ENCODE measurements at regions of chr11 and their contacts with region 1.

Region 1: GRCh38 chr11:124961972-124962609 is 8.1 kb downstream of the CCDC15 start:
- DNase-seq: peak in 1 of 4 donors; percentile 40
- ATAC-seq: peak; percentile 76
- H3K4me3 ChIP-seq: no peak overlapping the region
- H3K27ac ChIP-seq: no peak overlapping the region
- H3K4me1 ChIP-seq: no peaks in the 10 kb centered on the region
- H3K27me3 ChIP-seq: no peaks in the 10 kb centered on the region
- CTCF ChIP-seq: peak; percentile 37 to 87 (median 77)
- POLR2A ChIP-seq: no peak

Region 2: GRCh38 chr11:124359566-124359965 is 602.5 kb before region 1 on chr11:
- intact Hi-C with region 1: no loop called
- DNase-seq: no peak
- ATAC-seq: no peak
- H3K4me3 ChIP-seq: no peak overlapping the region
- H3K27ac ChIP-seq: no peak overlapping the region
- H3K4me1 ChIP-seq: no peaks in the 10 kb centered on the region
- H3K27me3 ChIP-seq: no peaks in the 10 kb centered on the region
- CTCF ChIP-seq: no peak
- POLR2A ChIP-seq: no peak

Region 3: GRCh38 chr11:125141686-125142535 is 179.8 kb after region 1 on chr11:
- intact Hi-C with region 1: loop called (anchors 5 kb)
- DNase-seq: peak; percentile 17 to 52 (median 36)
- ATAC-seq: peak; percentile 71
- H3K4me3 ChIP-seq: no peak overlapping the region
- H3K27ac ChIP-seq: no peak overlapping the region
- H3K4me1 ChIP-seq: no peaks in the 10 kb centered on the region
- H3K27me3 ChIP-seq: no peaks in the 10 kb centered on the region
- CTCF ChIP-seq: peak; percentile 65 to 95 (median 88)
- POLR2A ChIP-seq: no peak